ENCODE measurements at regions of chr5 and their contacts with region 1.

Region 1: GRCh38 chr5:151213800-151214613 is 9.9 kb downstream of the CCDC69 start:
- DNase-seq: peak; percentile 92
- H3K4me3 Mint-ChIP-seq: peak overlapping the region; percentile 86
- H3K27ac Mint-ChIP-seq: peak overlapping the region; percentile 98
- H3K4me1 Mint-ChIP-seq: peaks cover 77% of the 10 kb centered on the region
- H3K27me3 Mint-ChIP-seq: no peaks in the 10 kb centered on the region

Region 2: DNA sequence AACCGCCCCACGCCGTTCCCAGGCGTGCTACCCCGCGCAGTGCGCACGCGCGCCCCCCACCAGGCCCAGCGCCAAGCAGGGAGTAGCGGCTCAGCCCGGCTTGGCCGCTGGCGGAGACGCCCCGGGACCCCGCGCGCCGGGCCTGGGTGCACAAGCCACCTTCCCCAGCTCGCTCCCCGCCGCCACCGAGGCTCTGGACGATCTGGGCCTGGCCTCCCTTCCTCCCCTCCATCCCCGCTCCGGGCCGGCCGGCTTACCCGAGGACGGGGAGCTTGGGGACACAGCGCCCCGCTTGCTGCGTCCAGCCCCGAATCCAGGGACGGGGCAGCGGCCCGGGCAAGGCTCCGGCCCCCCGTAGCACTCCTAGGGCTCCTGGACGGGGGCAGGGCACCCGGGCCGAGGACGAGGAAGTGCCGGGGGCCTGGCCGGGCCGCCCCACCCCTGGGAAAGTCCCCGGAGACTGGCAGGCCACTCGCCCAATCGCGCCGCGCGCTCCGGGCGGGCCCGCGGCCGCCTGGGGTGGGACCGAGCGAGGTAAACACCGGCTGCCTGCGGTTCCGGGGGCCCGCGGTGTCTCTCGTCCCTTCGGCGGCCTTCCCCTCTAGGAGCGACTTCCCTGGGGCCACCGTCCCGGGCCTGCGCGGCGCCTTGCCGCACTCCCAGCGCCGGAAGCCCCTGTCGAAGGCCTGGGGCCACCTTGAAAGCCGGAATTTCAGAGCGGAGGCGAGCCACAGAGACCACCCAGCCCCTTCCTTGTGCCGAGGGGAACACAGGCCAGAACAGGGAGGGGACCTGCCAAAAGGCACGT is 133.2 kb before region 1 on chr5 and contains the start of gene TNIP1:
- CTCF ChIA-PET with region 1: no interaction called
- POLR2A ChIA-PET with region 1: interaction called, 11 read pairs
- DNase-seq: peak; percentile 94
- H3K4me3 Mint-ChIP-seq: peak within 1 kb of the TSS; percentile 88
- H3K27ac Mint-ChIP-seq: peak within 1 kb of the TSS; percentile 86
- H3K4me1 Mint-ChIP-seq: peaks cover 83% of the 10 kb centered on the region
- H3K27me3 Mint-ChIP-seq: no peaks in the 10 kb centered on the region
- total RNA-seq, gene TNIP1: 188 to 201 TPM

Region 3: DNA sequence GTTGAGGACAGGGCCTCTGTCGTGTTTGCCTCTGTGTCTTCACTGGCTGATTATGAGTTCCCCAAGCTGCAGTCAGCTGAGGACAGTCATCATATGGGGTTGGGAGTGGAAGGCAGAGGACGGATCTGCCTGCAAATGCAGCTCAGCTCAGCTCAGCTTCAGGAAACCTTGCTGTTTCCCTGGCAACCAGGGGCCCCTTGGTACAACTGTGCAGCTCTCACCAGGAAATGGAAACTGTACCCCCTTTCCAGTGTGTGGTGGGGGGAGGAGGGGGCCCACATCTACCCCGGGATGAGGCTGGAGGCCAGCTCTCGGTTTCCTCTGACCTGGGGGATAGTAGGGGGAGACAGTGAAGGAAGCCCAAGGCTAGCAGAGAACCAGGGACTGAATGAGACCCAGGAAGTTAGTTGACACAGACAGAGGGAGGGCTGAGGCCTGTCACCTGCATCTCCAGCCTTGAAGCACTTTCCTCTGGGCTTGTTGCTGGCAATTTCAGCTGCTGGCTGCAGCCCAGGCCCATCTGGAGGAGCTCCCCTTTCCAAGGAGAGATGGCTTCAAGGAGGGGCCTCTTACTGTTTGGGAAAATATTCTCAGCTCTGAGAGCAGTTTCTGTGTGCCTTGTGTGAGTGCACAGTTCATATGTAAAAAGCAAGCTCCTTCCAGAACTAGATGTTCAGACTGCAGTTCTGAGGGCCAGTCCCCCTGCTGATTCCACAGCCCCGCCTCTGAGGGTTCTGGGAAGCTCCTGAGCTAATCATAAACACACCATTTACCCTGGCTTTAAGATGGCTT is 63.3 kb before region 1 on chr5:
- CTCF ChIA-PET with region 1: no interaction called
- POLR2A ChIA-PET with region 1: interaction called, 21 read pairs
- DNase-seq: peak; percentile 83
- H3K4me3 Mint-ChIP-seq: peak overlapping the region; percentile 50
- H3K27ac Mint-ChIP-seq: peak overlapping the region; percentile 96
- H3K4me1 Mint-ChIP-seq: peaks cover 95% of the 10 kb centered on the region
- H3K27me3 Mint-ChIP-seq: no peaks in the 10 kb centered on the region

Region 4: GRCh38 chr5:151202381-151203139 is 11.4 kb before region 1 on chr5:
- CTCF ChIA-PET with region 1: interaction called, 8 read pairs
- POLR2A ChIA-PET with region 1: interaction called, 40 read pairs
- DNase-seq: peak; percentile 39
- H3K4me3 Mint-ChIP-seq: no peak overlapping the region
- H3K27ac Mint-ChIP-seq: peak overlapping the region; percentile 68
- H3K4me1 Mint-ChIP-seq: peaks cover 22% of the 10 kb centered on the region
- H3K27me3 Mint-ChIP-seq: no peaks in the 10 kb centered on the region

Region 5: GRCh38 chr5:151239237-151239861 is 25.3 kb after region 1 on chr5:
- CTCF ChIA-PET with region 1: interaction called, 41 read pairs
- POLR2A ChIA-PET with region 1: interaction called, 7 read pairs
- DNase-seq: peak; percentile 52
- H3K4me3 Mint-ChIP-seq: no peak overlapping the region
- H3K27ac Mint-ChIP-seq: no peak overlapping the region
- H3K4me1 Mint-ChIP-seq: peaks cover 40% of the 10 kb centered on the region
- H3K27me3 Mint-ChIP-seq: no peaks in the 10 kb centered on the region

Region 6: DNA sequence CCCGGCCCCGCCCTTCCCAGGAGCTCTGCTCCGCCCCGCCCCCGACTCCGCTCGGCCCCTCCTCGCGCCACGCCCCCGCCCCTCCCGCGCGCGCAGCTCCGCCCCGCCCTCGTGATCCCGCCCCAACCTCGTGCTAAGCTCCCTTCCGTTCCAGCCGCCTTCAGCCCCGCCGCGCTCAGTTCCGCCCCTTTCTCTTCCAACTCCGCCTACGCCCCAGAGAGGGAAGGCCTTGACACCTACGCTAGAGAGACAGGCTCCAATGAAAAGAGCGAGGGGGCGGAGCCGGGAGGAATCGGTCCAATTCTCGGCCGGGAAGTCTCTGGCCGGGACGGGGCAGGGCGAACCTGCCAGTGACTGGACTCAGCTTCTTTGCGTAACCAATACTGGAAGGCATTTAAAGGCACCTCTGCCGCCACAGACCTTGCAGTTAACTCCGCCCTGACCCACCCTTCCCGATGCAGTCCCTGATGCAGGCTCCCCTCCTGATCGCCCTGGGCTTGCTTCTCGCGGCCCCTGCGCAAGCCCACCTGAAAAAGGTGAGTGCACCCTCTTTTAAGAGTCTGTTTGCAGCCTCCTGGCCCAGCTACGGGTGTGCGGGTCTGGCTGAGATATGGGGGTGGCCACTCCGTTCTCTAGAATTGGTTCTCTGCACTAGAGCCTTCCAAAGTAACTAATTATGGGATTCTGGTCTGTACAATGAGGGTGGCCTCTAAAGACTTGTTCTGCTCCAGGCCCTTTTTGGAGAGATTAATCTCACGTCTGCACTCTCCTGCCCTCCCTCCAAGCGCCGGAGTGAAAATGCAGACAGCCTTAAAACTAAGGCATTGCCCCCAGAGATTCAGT is 39.0 kb after region 1 on chr5 and contains the start of gene GM2A:
- CTCF ChIA-PET with region 1: interaction called, 21 read pairs
- POLR2A ChIA-PET with region 1: interaction called, 99 read pairs
- DNase-seq: peak; percentile 99
- H3K4me3 Mint-ChIP-seq: peak within 1 kb of the TSS; percentile 82
- H3K27ac Mint-ChIP-seq: peak within 1 kb of the TSS; percentile 92
- H3K4me1 Mint-ChIP-seq: peaks cover 51% of the 10 kb centered on the region
- H3K27me3 Mint-ChIP-seq: no peaks in the 10 kb centered on the region
- total RNA-seq, gene GM2A: 22.4 to 24.5 TPM

Region 7: GRCh38 chr5:151447174-151448037 is 233.4 kb after region 1 on chr5 and contains the start of gene SLC36A1:
- CTCF ChIA-PET with region 1: no interaction called
- POLR2A ChIA-PET with region 1: no interaction called
- DNase-seq: peak; percentile 93
- H3K4me3 Mint-ChIP-seq: peak within 1 kb of the TSS; percentile 95
- H3K27ac Mint-ChIP-seq: peak within 1 kb of the TSS; percentile 77
- H3K4me1 Mint-ChIP-seq: peaks cover 25% of the 10 kb centered on the region
- H3K27me3 Mint-ChIP-seq: peaks cover 29% of the 10 kb centered on the region
- total RNA-seq, gene SLC36A1: 5.4 to 6.4 TPM

Measured in activated CD4-positive, alpha-beta memory T cell treated with anti-CD3 and anti-CD28 coated beads, Interleukin-2, amount 10 ng/mL, durations not matched to agents 7 days and 5 days (primary cell).